Naive thymus-derived CD4-positive, alpha-beta T cell (primary cell): ENCODE measurements at regions of chr17 and their contacts with region 1.

Region 1: DNA sequence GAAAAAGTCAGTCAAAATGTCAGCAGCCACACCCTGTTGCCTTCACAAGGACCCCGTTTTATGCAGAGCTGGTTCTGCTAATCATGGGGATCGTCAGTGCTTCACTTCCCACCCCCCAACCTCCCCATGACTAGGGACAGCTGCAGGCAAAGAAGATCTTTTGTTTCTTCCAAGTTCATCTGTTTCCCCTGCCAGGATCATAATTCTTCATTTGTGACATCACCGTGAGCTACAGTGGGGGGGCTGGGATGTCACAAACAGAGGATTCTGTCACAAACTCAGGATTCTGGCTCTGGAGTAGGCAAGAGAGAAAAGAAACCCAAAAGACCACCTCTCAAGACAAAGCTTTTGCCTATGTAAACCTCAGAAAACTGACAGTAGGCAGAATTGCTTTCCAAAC is 24.7 kb downstream of the DNAJC7 start:
- DNase-seq: no peak
- ATAC-seq: no peak
- H3K4me3 ChIP-seq: no peak overlapping the region
- H3K4me3 Mint-ChIP-seq: no peak overlapping the region
- H3K27ac ChIP-seq: no peak overlapping the region
- H3K27ac Mint-ChIP-seq: no peak overlapping the region
- H3K4me1 ChIP-seq: no peaks in the 10 kb centered on the region
- H3K4me1 Mint-ChIP-seq: peaks cover 0 to 7% (median 0%) of the 10 kb centered on the region in 7 donors
- H3K27me3 ChIP-seq: no peaks in the 10 kb centered on the region
- H3K27me3 Mint-ChIP-seq: no peaks in the 10 kb centered on the region

Region 2: GRCh38 chr17:41972571-41973411 is 19.8 kb before region 1 on chr17:
- CTCF ChIA-PET with region 1: no interaction called
- POLR2A ChIA-PET with region 1: no interaction called
- intact Hi-C with region 1: loop called in 1 of 2 experiments (anchors 1 kb)
- DNase-seq: no peak
- ATAC-seq: peak; percentile 31
- H3K4me3 ChIP-seq: no peak overlapping the region
- H3K4me3 Mint-ChIP-seq: peak overlapping the region in 1 of 10 donors; percentile 16
- H3K27ac ChIP-seq: no peak overlapping the region
- H3K27ac Mint-ChIP-seq: peak overlapping the region in 8 of 9 donors; percentile 1 to 76 (median 34)
- H3K4me1 ChIP-seq: peaks cover 2 to 10% of the 10 kb centered on the region in 2 donors
- H3K4me1 Mint-ChIP-seq: peaks cover 17 to 37% (median 34%) of the 10 kb centered on the region in 7 donors
- H3K27me3 ChIP-seq: no peaks in the 10 kb centered on the region
- H3K27me3 Mint-ChIP-seq: no peaks in the 10 kb centered on the region

Region 3: DNA sequence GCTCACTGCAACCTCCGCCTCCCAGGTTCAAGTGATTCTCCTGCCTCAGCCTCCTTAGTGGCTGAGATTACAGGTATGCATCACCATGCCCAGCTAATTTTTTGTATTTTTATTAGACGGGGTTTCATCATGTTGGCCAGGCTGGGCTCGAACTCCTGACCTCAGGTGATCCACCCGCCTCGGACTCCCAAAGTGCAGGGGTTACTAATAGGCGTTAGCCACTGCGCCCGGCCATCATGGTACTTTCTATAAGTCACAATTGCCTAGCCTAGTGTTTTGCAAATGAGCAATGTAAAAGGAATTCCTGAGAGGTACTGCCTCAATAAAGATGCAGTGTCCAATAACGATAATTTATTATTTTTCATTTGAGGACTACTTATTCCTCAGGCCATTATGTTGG is 598.8 kb after region 1 on chr17:
- CTCF ChIA-PET with region 1: no interaction called
- POLR2A ChIA-PET with region 1: no interaction called
- intact Hi-C with region 1: no loop called
- DNase-seq: no peak
- ATAC-seq: no peak
- H3K4me3 ChIP-seq: no peak overlapping the region
- H3K4me3 Mint-ChIP-seq: no peak overlapping the region
- H3K27ac ChIP-seq: no peak overlapping the region
- H3K27ac Mint-ChIP-seq: no peak overlapping the region
- H3K4me1 ChIP-seq: no peaks in the 10 kb centered on the region
- H3K4me1 Mint-ChIP-seq: peaks cover 5 to 32% (median 22%) of the 10 kb centered on the region in 7 donors
- H3K27me3 ChIP-seq: no peaks in the 10 kb centered on the region
- H3K27me3 Mint-ChIP-seq: no peaks in the 10 kb centered on the region